ENCODE measurements at regions of chr3 and their contacts with region 1.

Region 1: GRCh38 chr3:162400697-162401096 is 904.1 kb downstream of the OTOL1 start:
- DNase-seq: no peak
- ATAC-seq: no peak
- H3K4me3 Mint-ChIP-seq: no peak overlapping the region
- H3K27ac Mint-ChIP-seq: no peak overlapping the region
- H3K4me1 Mint-ChIP-seq: no peaks in the 10 kb centered on the region
- H3K27me3 Mint-ChIP-seq: no peaks in the 10 kb centered on the region

Region 2: DNA sequence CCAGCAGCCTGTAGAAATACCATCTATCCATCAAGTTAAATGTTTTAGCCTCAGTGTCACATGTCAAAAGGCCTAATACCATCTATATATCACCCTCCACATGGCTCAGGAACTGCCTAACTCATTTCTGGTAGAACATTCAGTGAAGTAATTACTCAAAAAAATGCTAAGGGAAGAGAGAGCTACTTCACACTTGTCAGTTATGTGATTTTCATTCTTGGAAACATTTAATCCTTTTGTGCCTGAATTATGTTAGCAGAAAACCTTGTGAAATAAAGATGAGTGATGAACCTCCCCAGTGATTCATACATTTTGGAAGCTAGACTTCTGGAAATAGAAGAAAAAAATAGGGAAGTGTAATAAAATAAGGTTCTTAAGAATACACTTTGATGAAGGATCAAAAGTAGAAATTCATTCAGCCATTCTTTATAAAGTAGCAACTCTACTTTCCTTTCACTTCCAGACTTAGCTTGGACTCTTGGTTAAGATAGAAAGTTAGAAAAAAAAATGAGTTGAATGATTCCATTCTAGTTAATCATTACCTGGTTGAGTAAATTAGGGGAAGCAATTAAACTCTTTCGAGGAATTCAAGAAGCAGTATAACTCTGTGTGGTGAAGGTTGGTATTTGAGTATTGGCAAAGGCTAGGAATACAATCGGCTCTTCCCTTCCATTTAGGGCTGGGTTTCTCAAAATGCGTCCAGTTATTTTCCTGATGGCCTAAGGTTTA is 900.5 kb before region 1 on chr3:
- CTCF ChIA-PET with region 1: no interaction called
- POLR2A ChIA-PET with region 1: no interaction called
- intact Hi-C with region 1: no loop called
- DNase-seq: no peak
- ATAC-seq: no peak
- H3K4me3 Mint-ChIP-seq: no peak overlapping the region
- H3K27ac Mint-ChIP-seq: no peak overlapping the region
- H3K4me1 Mint-ChIP-seq: no peaks in the 10 kb centered on the region
- H3K27me3 Mint-ChIP-seq: peaks cover 9% of the 10 kb centered on the region

Region 3: GRCh38 chr3:162317046-162317445 is 83.7 kb before region 1 on chr3:
- CTCF ChIA-PET with region 1: no interaction called
- POLR2A ChIA-PET with region 1: no interaction called
- intact Hi-C with region 1: no loop called
- DNase-seq: no peak
- ATAC-seq: no peak
- H3K4me3 Mint-ChIP-seq: no peak overlapping the region
- H3K27ac Mint-ChIP-seq: no peak overlapping the region
- H3K4me1 Mint-ChIP-seq: no peaks in the 10 kb centered on the region
- H3K27me3 Mint-ChIP-seq: no peaks in the 10 kb centered on the region

Region 4: DNA sequence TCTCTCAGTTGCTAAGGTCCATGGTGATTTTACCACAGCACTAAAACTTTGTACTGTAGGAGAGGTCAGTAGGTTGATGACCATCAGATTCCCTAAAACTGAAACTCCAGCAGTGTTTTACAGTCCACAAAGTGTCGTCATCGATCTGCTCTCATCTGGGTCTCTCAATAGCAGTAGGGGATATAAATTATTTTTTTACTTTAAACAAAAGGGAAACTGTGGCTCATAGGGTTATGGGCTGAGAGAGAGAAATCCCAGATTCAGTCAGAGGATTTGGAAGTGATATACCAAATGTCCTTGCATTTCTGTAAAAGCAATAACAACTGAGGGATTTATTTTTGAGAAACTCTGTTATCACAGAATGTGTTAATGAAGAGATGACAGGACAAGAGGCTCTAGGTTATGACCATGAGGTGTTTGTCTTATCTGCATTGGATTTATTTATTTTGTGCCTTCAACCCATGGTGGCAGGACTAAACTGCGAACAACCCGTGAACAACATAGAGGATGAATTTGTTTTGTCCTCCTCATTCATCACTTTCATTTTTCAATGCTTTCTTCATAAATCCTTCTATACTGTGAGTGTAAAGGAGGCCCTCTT is 34.4 kb before region 1 on chr3:
- CTCF ChIA-PET with region 1: no interaction called
- POLR2A ChIA-PET with region 1: no interaction called
- intact Hi-C with region 1: loop called in 1 of 2 experiments (anchors 2 kb)
- DNase-seq: no peak
- ATAC-seq: no peak
- H3K4me3 Mint-ChIP-seq: no peak overlapping the region
- H3K27ac Mint-ChIP-seq: no peak overlapping the region
- H3K4me1 Mint-ChIP-seq: no peaks in the 10 kb centered on the region
- H3K27me3 Mint-ChIP-seq: no peaks in the 10 kb centered on the region